MCF 10A (cell line): ENCODE measurements at regions of chr13 and their contacts with region 1.

Region 1: DNA sequence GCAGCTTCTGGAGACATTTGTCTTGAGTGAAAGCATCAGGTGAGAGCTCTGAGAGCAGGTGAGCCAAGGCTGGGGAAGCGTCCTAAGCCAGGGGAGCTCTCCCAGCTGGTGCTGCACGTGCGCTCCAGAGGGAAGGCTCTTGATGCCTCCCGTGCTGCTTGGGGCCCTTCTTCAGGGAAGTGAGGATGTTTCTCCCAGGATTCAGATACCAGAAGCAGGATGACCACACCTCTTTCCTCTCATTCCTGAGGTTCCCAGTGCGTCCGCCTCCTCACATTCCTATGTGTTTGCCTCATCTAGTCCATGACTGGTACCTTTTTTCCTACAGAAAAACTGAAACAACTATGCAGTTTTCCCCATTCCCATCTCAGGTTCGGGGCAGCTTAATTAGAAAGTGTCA is 231.0 kb upstream of the IRS2 start:
- DNase-seq: peak; percentile 93
- H3K4me3 Mint-ChIP-seq: peak overlapping the region; percentile 30
- H3K27ac Mint-ChIP-seq: peak overlapping the region; percentile 92
- H3K4me1 Mint-ChIP-seq: peaks cover 53% of the 10 kb centered on the region
- H3K27me3 Mint-ChIP-seq: no peaks in the 10 kb centered on the region
- CTCF ChIP-seq: no peak

Region 2: DNA sequence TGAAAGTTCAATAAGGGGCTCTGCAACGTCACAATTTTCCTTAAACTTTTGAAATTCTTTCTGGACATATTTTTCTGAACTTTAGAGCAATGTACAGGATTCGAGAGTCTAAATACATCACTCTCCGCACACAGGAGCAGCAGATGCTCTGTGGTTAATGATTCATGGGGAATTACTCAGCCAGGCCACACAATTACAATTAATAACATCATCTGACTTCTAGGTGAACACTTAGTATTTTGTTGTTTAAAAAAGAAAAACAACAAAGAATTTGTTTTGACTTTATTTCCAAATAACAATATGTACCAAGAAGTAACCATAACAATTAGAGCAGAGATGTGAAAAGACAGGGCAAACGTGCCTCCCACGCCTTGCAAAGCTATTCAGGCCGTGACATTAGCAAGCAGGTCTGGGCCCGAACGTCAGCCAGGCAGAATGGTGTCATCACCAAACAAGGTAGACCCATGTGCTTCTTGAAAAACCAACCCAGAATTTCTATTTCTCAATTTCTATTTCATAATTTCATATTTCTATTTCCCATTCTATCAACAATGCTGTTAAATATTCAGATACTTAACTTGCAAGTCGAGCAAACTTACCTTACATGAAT is 53.2 kb after region 1 on chr13:
- CTCF ChIA-PET with region 1: no interaction called
- POLR2A ChIA-PET with region 1: interaction called, 11 read pairs
- intact Hi-C with region 1: loop called (anchors 2 kb)
- DNase-seq: peak; percentile 78
- H3K4me3 Mint-ChIP-seq: peak overlapping the region; percentile 50
- H3K27ac Mint-ChIP-seq: peak overlapping the region; percentile 98
- H3K4me1 Mint-ChIP-seq: peaks cover 41% of the 10 kb centered on the region
- H3K27me3 Mint-ChIP-seq: no peaks in the 10 kb centered on the region
- CTCF ChIP-seq: no peak